Mammary epithelial cell (primary cell): ENCODE measurements at regions of chr7 and their contacts with region 1.

Region 1: DNA sequence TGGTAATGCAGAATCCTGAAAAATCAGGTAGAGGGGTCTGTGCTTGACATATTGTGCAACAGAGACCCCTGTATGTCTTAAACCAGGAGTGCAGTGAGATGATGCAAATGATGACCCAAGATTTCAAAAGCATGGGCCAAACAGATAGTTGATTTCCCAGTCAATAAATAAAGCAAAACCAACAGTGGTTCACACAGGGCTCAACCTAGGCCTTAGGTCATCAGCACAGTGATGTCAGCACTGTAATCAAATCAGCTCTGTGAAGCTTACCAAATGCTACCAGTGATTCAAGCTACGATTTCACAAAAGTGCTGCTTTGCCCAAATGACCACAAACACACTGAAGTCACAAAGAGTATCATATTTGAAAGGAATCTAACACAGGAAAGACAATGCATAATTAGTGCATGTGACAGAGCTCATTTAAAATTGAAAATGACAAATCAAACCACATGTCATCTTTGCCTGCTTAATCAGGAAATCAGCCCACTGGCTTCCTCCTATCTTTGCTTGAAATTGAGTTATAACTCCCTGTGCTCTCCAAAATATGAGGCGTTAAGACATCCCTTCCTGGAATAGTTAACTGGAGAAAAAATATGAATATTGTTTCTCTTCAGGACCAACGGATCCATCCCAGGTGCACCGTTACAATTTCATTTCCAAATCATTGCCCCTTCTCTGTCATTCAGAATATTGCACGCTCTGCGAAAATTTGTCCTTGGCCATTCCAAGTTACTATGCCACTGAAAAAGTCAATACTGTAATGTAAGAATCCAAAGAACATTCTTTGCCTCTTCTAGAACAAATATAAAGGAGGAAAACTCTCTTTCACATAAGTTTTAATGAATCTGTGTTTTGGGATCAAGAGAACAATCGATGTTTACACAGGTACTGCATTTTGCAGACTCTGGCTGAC is 41.9 kb upstream of the ASL start:
- DNase-seq: no peak
- H3K4me3 ChIP-seq: no peak overlapping the region
- H3K27ac ChIP-seq: no peak overlapping the region
- H3K4me1 ChIP-seq: no peaks in the 10 kb centered on the region
- H3K27me3 ChIP-seq: no peaks in the 10 kb centered on the region
- CTCF ChIP-seq: no peak

Region 2: GRCh38 chr7:65750511-65751344 is 283.0 kb before region 1 on chr7:
- CTCF ChIA-PET with region 1: interaction called, 19 read pairs
- dilution Hi-C with region 1: no loop called
- in situ Hi-C with region 1: no loop called
- intact Hi-C with region 1: no loop called
- DNase-seq: peak; percentile 90
- H3K4me3 ChIP-seq: peak overlapping the region; percentile 80 to 99 (median 92)
- H3K27ac ChIP-seq: peak overlapping the region; percentile 85
- H3K4me1 ChIP-seq: peaks cover 9% of the 10 kb centered on the region
- H3K27me3 ChIP-seq: no peaks in the 10 kb centered on the region
- CTCF ChIP-seq: no peak

Region 3: GRCh38 chr7:66075590-66076461 is 42.1 kb after region 1 on chr7 and contains the start of gene ASL:
- CTCF ChIA-PET with region 1: interaction called, 32 read pairs
- dilution Hi-C with region 1: no loop called
- in situ Hi-C with region 1: no loop called
- intact Hi-C with region 1: loop called (anchors 1 kb)
- DNase-seq: peak; percentile 88
- H3K4me3 ChIP-seq: peak within 1 kb of the TSS; percentile 80 to 97 (median 80)
- H3K27ac ChIP-seq: peak within 1 kb of the TSS; percentile 47
- H3K4me1 ChIP-seq: peaks cover 4% of the 10 kb centered on the region
- H3K27me3 ChIP-seq: no peaks in the 10 kb centered on the region
- CTCF ChIP-seq: no peak
- total RNA-seq, gene ASL: 43.5 to 59.7 TPM

Region 4: GRCh38 chr7:66140924-66141323 is 107.2 kb after region 1 on chr7:
- CTCF ChIA-PET with region 1: no interaction called
- dilution Hi-C with region 1: no loop called
- in situ Hi-C with region 1: no loop called
- intact Hi-C with region 1: loop called (anchors 5 kb)
- DNase-seq: peak; percentile 56
- H3K4me3 ChIP-seq: no peak overlapping the region
- H3K27ac ChIP-seq: peak overlapping the region; percentile 7
- H3K4me1 ChIP-seq: peaks cover 20% of the 10 kb centered on the region
- H3K27me3 ChIP-seq: no peaks in the 10 kb centered on the region
- CTCF ChIP-seq: peak; percentile 40 to 76

Region 5: DNA sequence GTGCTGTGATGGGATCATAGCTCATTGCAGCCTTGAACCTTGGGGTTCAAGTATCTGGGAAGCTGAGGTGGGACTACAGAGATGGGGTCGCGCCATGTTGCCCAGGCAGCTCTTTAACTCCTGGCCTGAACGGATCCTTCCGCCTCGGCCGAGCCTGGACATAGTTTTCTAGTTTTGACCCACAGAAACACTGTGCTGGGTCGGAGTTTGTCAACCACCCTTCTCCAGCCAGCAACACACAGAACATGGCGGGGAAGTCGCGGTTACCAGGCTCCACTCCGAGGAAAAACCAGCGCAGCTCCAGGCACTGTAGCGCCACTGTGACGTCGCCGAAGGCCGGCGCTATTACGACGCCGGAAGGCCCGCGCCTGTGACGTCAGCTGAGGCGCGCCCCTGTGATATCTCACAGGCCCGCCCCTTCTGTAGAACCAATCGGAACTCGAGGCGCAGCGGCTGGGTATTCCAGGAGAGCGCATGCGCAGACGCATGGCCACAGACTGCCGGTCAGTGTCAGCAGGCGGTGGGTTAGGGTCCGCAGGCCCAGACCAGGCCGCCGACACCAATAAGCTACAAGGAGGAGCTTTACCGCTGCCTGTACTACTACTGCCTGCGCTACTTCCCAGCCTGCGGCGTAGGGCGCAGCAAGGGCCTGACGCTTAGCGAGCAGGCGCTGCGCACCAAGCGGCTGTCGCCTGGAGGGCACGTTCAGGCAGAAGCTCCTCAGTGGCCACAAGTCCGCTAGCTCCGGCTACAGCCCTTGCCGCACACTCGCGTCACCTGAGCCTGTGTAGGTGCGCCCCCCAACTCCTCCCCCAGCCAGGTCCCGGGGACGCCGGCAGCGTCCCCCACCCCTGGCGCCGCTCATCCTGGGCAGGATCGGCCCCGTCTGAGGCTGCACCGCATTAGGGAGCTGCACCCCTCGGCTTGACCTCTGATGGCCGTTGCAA is 459.8 kb after region 1 on chr7:
- CTCF ChIA-PET with region 1: interaction called, 5 read pairs
- dilution Hi-C with region 1: no loop called
- in situ Hi-C with region 1: no loop called
- intact Hi-C with region 1: loop called (anchors 2 kb)
- DNase-seq: peak; percentile 95
- H3K4me3 ChIP-seq: peak overlapping the region; percentile 66 to 85 (median 82)
- H3K27ac ChIP-seq: peak overlapping the region; percentile 88
- H3K4me1 ChIP-seq: peaks cover 14% of the 10 kb centered on the region
- H3K27me3 ChIP-seq: no peaks in the 10 kb centered on the region
- CTCF ChIP-seq: no peak